ENCODE measurements at regions of chr1 and their contacts with region 1.

Region 1: DNA sequence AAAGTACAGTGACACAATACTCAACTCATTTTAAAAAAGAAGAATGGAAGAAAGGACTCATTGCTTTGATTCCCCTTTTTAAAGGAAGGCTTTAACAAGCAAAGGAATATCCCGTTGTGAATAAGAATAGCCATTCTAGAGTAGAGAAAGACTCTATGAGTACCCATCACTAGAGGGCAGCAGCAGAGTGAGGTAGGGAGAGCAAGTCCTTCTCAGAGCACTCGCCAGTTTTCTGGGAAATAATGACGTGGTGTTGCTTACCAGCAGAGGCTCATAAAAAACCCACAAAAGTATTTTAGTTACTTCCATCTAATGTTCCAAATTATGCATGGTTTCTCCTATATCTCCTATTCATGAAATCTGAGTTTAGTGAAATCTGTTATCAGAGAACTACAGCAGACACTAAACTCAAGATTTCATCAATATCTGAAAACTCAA is 74.6 kb downstream of the USP24 start:
- DNase-seq: peak; percentile 83
- H3K4me3 ChIP-seq: no peak overlapping the region
- H3K27ac ChIP-seq: no peak overlapping the region
- H3K4me1 ChIP-seq: no peaks in the 10 kb centered on the region
- H3K27me3 ChIP-seq: no peaks in the 10 kb centered on the region
- CTCF ChIP-seq: peak; percentile 49 to 87 (median 84)
- POLR2A ChIP-seq: no peak

Region 2: DNA sequence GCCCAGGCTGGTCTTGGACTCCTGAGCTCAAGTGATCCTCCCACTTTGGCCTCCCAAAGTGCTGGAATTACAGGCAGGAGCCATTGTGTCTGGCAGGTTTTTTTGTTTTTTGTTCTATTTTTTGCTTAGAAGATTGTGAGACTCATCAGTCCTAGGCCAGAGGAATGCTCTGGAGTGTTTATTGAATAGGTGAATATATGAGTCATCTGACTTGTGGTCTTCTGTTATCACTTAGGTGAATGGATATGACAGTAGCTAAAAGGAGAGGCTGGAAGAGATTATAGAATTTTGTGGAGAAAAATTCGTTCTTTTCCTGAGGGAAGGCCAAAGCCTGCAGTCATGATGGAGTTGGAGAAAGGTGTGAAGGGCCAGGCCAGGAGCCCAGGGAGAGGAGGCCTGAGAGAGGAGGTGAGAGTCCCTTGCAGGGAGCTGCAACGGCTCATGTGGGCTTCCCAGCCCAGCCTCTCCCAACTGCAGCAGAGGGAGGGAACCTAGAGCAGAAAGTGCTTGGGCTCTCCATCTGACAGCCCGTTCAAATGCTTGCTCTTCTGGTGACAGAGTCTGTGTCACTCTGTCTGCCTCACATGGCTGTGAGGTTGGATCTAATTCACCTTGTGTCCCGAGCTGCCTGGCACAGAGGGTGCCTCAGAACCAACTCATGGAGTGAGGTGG is 624.2 kb before region 1 on chr1:
- intact Hi-C with region 1: no loop called
- DNase-seq: no peak
- H3K4me3 ChIP-seq: no peak overlapping the region
- H3K27ac ChIP-seq: no peak overlapping the region
- H3K4me1 ChIP-seq: no peaks in the 10 kb centered on the region
- H3K27me3 ChIP-seq: no peaks in the 10 kb centered on the region
- CTCF ChIP-seq: no peak
- POLR2A ChIP-seq: no peak

Region 3: GRCh38 chr1:55214212-55215005 is 73.8 kb after region 1 on chr1:
- intact Hi-C with region 1: loop called (anchors 5 kb)
- DNase-seq: peak; percentile 7
- H3K4me3 ChIP-seq: peak overlapping the region; percentile 80 to 85
- H3K27ac ChIP-seq: peak overlapping the region; percentile 92 to 98
- H3K4me1 ChIP-seq: peaks cover 3% of the 10 kb centered on the region
- H3K27me3 ChIP-seq: no peaks in the 10 kb centered on the region
- CTCF ChIP-seq: no peak
- POLR2A ChIP-seq: no peak

Region 4: GRCh38 chr1:55277377-55278130 is 137.0 kb after region 1 on chr1:
- intact Hi-C with region 1: loop called (anchors 2 kb)
- DNase-seq: peak; percentile 60
- H3K4me3 ChIP-seq: no peak overlapping the region
- H3K27ac ChIP-seq: no peak overlapping the region
- H3K4me1 ChIP-seq: no peaks in the 10 kb centered on the region
- H3K27me3 ChIP-seq: no peaks in the 10 kb centered on the region
- CTCF ChIP-seq: peak; percentile 73 to 92 (median 81)
- POLR2A ChIP-seq: no peak

Region 5: DNA sequence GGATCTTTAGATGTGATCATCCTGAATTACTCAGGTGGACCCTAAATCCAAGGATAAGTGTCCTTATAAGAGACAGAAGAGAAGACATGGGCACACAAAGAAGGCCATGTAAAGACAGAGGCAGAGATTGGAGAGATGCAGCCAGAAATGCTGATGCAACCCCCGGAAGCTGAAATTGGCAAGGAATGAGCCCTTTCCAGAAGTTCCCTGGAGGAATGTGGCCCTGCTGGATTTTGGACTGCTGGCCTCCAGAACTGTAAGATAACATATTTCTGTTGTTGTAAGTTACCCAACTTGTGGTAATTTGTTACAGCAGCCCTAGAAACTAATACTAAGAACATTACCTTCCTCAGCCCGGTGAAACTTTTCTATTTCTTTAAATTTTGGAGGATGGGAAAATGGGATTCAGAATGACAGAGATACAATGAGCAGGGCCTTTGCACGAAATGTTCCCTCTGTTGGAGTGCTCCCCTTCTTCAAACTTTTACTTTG is 1450.0 kb after region 1 on chr1:
- intact Hi-C with region 1: loop called (anchors 10 kb)
- DNase-seq: no peak
- H3K4me3 ChIP-seq: no peak overlapping the region
- H3K27ac ChIP-seq: no peak overlapping the region
- H3K4me1 ChIP-seq: no peaks in the 10 kb centered on the region
- H3K27me3 ChIP-seq: no peaks in the 10 kb centered on the region
- CTCF ChIP-seq: no peak
- POLR2A ChIP-seq: no peak

Measured in prostate gland (tissue), 2 donors.